Natural killer cell (primary cell): ENCODE measurements at regions of chr1 and their contacts with region 1.

Region 1: GRCh38 chr1:108691942-108692723 is at the start of gene PRPF38B:
- DNase-seq: peak; percentile 93 to 96
- ATAC-seq: peak; percentile 82 to 93 (median 84)
- H3K4me3 ChIP-seq: peak within 1 kb of the TSS; percentile 86
- H3K4me3 Mint-ChIP-seq: peak within 1 kb of the TSS; percentile 97
- H3K27ac ChIP-seq: peak within 1 kb of the TSS; percentile 99
- H3K27ac Mint-ChIP-seq: peak within 1 kb of the TSS; percentile 98 to 100
- H3K4me1 ChIP-seq: peaks cover 15% of the 10 kb centered on the region
- H3K4me1 Mint-ChIP-seq: peaks cover 47 to 53% of the 10 kb centered on the region in 2 donors
- H3K27me3 ChIP-seq: no peaks in the 10 kb centered on the region
- H3K27me3 Mint-ChIP-seq: no peaks in the 10 kb centered on the region
- CTCF ChIP-seq: no peak
- total RNA-seq, gene PRPF38B: 115 to 158 (median 156) TPM

Region 2: DNA sequence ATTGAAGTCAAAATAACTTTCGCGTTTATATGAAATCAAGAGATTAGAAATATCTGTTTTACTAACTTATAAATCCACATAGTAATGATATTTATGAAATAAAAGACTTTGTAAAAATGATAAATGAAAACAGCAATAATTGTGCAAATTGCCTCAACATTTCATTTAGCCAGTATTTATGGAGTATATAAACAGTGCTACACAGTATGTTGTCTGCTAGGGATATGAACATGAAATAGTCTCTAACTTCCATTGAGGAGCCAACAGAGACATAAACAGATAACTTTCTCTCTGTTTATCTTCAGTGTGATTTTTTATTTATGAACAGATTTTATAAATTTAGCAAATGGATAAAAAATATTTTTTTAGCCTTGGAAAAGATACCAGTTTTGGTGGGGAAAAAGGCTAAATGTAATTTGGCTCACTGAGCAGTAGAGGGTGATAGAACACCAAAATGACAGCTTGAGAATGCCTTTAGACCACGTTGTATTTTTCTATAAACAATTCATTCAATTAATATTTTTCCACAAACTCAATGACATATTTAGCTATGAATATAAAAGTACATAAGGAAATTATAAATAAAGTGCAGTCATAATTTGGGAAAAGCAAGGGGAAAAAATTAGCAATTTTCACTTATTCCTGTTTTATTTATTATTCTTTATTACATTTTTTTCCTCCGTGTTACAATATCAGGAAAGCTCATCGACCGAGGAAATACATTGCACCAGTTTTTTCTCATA is 179.7 kb before region 1 on chr1:
- intact Hi-C with region 1: loop called (anchors 2 kb)
- DNase-seq: peak in 1 of 2 donors; percentile 78
- ATAC-seq: peak; percentile 59 to 82 (median 79)
- H3K4me3 ChIP-seq: no peak overlapping the region
- H3K4me3 Mint-ChIP-seq: no peak overlapping the region
- H3K27ac ChIP-seq: no peak overlapping the region
- H3K27ac Mint-ChIP-seq: no peak overlapping the region
- H3K4me1 ChIP-seq: no peaks in the 10 kb centered on the region
- H3K4me1 Mint-ChIP-seq: no peaks in the 10 kb centered on the region
- H3K27me3 ChIP-seq: no peaks in the 10 kb centered on the region
- H3K27me3 Mint-ChIP-seq: peaks cover 12% of the 10 kb centered on the region in 2 donors
- CTCF ChIP-seq: peak; percentile 97

Region 3: GRCh38 chr1:108590957-108591356 is 101.2 kb before region 1 on chr1:
- intact Hi-C with region 1: loop called (anchors 2 kb)
- DNase-seq: peak in 1 of 2 donors; percentile 86
- ATAC-seq: peak; percentile 71 to 84 (median 84)
- H3K4me3 ChIP-seq: no peak overlapping the region
- H3K4me3 Mint-ChIP-seq: peak overlapping the region; percentile 64
- H3K27ac ChIP-seq: peak overlapping the region; percentile 88
- H3K27ac Mint-ChIP-seq: peak overlapping the region; percentile 88 to 91
- H3K4me1 ChIP-seq: peaks cover 14% of the 10 kb centered on the region
- H3K4me1 Mint-ChIP-seq: peaks cover 49 to 53% of the 10 kb centered on the region in 2 donors
- H3K27me3 ChIP-seq: no peaks in the 10 kb centered on the region
- H3K27me3 Mint-ChIP-seq: no peaks in the 10 kb centered on the region
- CTCF ChIP-seq: no peak

Region 4: DNA sequence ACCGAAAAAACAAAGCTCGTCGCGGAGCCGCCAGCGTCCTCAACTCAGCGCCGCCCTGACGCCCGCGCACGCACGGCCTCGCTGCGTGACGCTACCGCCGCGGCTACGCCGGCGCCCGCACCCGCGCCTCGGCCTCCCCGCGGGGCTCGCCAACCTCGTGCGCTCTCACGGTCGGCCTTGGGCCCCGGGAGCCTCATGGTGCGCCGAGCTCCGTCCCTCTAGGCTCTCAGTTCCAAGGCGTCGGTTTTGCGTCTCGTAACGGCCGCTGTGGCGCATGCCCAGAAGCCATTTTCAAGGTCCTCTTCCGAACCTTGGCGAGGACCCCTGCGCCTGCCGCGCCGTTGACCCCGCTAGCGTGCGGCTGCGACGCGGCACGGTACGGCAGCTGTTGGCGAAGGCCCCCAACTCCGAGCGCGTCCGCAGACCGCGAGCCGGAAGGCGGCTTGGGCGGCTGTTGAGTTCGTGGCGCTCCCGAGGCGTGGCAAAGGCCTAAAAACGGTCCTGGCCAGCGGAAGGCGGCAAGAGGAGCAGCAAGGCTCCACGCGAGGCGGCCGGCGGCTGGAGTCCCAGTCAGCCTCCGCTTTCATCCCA is 31.0 kb before region 1 on chr1 and contains the start of gene HENMT1:
- intact Hi-C with region 1: loop called (anchors 1 kb)
- DNase-seq: peak; percentile 71 to 94
- ATAC-seq: peak; percentile 79 to 91 (median 81)
- H3K4me3 ChIP-seq: peak within 1 kb of the TSS; percentile 51
- H3K4me3 Mint-ChIP-seq: peak within 1 kb of the TSS; percentile 86
- H3K27ac ChIP-seq: peak within 1 kb of the TSS; percentile 96
- H3K27ac Mint-ChIP-seq: peak within 1 kb of the TSS; percentile 94 to 96
- H3K4me1 ChIP-seq: peaks cover 19% of the 10 kb centered on the region
- H3K4me1 Mint-ChIP-seq: peaks cover 30 to 53% of the 10 kb centered on the region in 2 donors
- H3K27me3 ChIP-seq: no peaks in the 10 kb centered on the region
- H3K27me3 Mint-ChIP-seq: no peaks in the 10 kb centered on the region
- CTCF ChIP-seq: no peak
- total RNA-seq, gene HENMT1: 26.9 to 41.5 (median 30.6) TPM

Region 5: DNA sequence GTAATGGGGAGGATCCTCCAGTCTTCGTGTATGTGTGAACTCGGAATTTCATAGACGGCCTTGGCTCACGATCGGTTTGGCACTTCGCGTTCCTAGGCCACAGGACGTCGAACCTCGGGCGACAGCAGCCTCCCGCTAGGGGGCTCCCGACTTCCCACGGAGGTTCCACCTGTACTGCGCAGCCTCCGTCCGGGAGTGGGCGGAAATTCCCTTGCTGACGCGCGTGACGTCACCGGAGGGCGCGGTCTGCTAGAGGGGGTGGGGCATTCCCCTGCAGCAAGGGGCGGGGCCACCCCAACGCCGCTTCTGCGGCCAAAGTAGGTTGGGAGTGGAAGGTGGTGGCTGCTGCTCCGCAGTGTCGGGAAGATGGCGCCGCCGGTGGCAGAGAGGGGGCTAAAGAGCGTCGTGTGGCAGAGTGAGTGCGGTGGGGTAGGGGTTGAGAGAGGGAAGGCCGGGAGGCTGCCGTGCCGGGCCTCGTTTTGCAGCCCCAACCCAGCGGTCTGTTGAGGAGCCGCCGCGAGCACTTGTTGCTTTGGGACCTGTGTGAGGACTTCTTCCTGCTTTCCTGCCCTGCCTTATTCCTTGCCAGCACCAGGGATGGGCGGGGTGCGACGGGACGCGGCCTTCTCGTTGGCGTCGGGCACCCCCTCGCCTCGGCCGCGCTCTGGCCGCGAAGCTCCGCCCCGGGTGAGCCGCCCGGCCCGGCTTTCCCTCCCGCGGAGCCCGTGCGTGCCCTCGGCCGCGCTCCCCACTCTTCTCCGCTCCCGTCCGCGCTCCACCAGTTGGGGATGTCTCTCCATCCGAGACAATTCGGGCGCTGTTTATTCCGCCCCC is 54.5 kb after region 1 on chr1 and contains the start of gene STXBP3:
- intact Hi-C with region 1: loop called (anchors 1 kb)
- DNase-seq: peak; percentile 100
- ATAC-seq: peak; percentile 90 to 97 (median 91)
- H3K4me3 ChIP-seq: peak within 1 kb of the TSS; percentile 98
- H3K4me3 Mint-ChIP-seq: peak within 1 kb of the TSS; percentile 100
- H3K27ac ChIP-seq: peak within 1 kb of the TSS; percentile 99
- H3K27ac Mint-ChIP-seq: peak within 1 kb of the TSS; percentile 97 to 100
- H3K4me1 ChIP-seq: peaks cover 13% of the 10 kb centered on the region
- H3K4me1 Mint-ChIP-seq: peaks cover 36 to 37% of the 10 kb centered on the region in 2 donors
- H3K27me3 ChIP-seq: no peaks in the 10 kb centered on the region
- H3K27me3 Mint-ChIP-seq: peaks cover 3 to 6% of the 10 kb centered on the region in 2 donors
- CTCF ChIP-seq: peak; percentile 88
- total RNA-seq, gene STXBP3: 63.1 to 71.4 (median 69.2) TPM

Region 6: DNA sequence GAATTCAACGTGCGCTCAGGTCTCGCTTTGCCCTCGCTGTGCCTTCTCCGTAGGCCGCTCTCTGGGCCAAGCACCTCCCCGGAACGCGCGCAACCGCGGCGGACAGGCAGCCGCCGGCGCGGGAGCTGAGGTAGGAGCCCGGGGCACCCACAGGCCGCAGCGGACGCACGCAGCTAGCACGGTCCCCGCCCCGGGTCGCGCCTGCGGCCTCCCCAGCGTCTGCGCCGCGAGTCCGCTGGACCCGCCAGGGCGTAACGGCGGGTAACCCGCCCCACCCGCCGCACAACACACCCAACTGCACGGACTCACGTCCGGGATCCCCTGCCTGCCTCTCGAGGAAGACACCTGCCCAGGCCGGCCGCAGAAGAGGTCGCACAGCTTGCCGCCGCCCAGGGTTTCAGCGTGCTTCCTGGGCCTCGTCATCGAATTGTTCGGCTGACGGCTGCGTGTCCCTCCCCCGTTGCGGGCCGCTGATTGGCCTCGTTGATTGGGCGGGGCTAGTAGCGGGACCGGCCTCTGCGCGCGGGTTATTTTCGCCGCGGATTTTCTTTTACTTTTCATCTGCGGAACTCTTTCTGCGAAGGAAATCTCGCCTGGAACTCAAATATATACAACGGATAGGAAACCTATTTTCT is 271.0 kb after region 1 on chr1 and contains the start of gene CLCC1:
- intact Hi-C with region 1: loop called (anchors 5 kb)
- DNase-seq: peak; percentile 88 to 95
- ATAC-seq: peak; percentile 88 to 95 (median 94)
- H3K4me3 ChIP-seq: peak within 1 kb of the TSS; percentile 52
- H3K4me3 Mint-ChIP-seq: peak within 1 kb of the TSS; percentile 93
- H3K27ac ChIP-seq: peak within 1 kb of the TSS; percentile 82
- H3K27ac Mint-ChIP-seq: peak within 1 kb of the TSS; percentile 89 to 90
- H3K4me1 ChIP-seq: peaks cover 18% of the 10 kb centered on the region
- H3K4me1 Mint-ChIP-seq: peaks cover 20 to 24% of the 10 kb centered on the region in 2 donors
- H3K27me3 ChIP-seq: peaks cover 3% of the 10 kb centered on the region
- H3K27me3 Mint-ChIP-seq: peaks cover 0 to 10% of the 10 kb centered on the region in 2 donors
- CTCF ChIP-seq: no peak
- total RNA-seq, gene CLCC1: 12.8 to 25.8 (median 17.1) TPM

Region 7: GRCh38 chr1:110106013-110106941 is 1414.1 kb after region 1 on chr1:
- intact Hi-C with region 1: no loop called
- DNase-seq: peak; percentile 37 to 76
- ATAC-seq: peak; percentile 71 to 94 (median 89)
- H3K4me3 ChIP-seq: no peak overlapping the region
- H3K4me3 Mint-ChIP-seq: no peak overlapping the region
- H3K27ac ChIP-seq: no peak overlapping the region
- H3K27ac Mint-ChIP-seq: no peak overlapping the region
- H3K4me1 ChIP-seq: no peaks in the 10 kb centered on the region
- H3K4me1 Mint-ChIP-seq: peaks cover 5 to 6% of the 10 kb centered on the region in 2 donors
- H3K27me3 ChIP-seq: no peaks in the 10 kb centered on the region
- H3K27me3 Mint-ChIP-seq: peaks cover 9 to 11% of the 10 kb centered on the region in 2 donors
- CTCF ChIP-seq: peak; percentile 75